Dorsolateral prefrontal cortex (tissue), 120 donors: ENCODE measurements at regions of chr1 and their contacts with region 1.

Region 1: GRCh38 chr1:39091845-39092645 is 65.9 kb downstream of the NDUFS5 start:
- DNase-seq: peak; percentile 61 to 82 (median 75)
- H3K4me3 ChIP-seq: no peak overlapping the region
- H3K27ac ChIP-seq: peak overlapping the region in 49 of 59 donors; percentile 3 to 93 (median 81)
- H3K27me3 ChIP-seq: no peaks in the 10 kb centered on the region
- CTCF ChIP-seq: peak in 55 of 56 donors; percentile 10 to 77 (median 68)

Region 2: DNA sequence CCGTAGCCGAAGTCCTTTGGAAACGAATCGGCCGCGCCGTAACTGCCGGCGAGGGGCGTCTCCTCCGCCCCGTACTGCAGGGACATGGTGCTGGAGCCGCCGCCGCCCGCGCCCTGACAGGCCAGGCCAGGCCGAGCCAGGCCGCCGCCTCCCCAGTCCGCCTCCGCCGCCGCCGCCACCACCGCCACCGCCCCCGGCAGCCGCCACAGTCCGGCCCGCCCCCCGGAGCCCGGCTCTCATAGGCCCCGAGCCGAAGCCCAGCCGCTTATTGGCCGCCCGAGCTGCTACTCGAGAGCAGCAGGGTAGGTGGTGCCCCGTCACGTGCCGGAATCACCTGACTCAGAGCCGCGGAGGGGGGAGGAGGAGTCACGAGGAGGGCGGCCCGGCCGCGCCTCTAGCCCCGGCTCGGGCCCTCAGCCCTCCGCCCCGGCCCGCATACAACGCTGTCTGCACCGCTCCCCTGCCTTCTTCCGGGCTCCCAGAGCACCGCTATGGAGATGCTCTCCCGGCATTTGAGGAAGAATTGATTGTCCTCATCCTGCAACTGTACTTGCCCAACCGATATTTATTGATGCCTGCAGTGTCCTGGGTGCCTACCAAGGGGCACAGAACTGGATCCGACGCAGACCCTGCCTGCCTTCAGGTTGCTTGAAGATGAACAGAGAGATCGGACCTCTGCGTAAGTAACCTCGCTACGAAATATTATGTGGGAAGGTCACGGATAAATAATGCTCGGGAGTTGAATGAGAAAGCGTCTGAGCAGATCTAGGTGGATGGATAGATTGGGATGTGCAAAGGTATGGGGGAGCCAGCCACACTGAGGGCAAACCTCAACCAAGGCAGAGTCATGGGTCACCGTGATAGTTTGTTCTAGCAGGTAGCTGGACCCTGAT is 232.2 kb before region 1 on chr1 and contains the start of gene RRAGC:
- intact Hi-C with region 1: loop called in 1 of 2 experiments (anchors 5 kb)
- DNase-seq: peak; percentile 99 to 100 (median 100)
- H3K4me3 ChIP-seq: peak within 1 kb of the TSS; percentile 70 to 100 (median 95)
- H3K27ac ChIP-seq: peak within 1 kb of the TSS; percentile 66 to 97 (median 89)
- H3K27me3 ChIP-seq: no peaks in the 10 kb centered on the region
- CTCF ChIP-seq: peak in 9 of 56 donors; percentile 2 to 31 (median 10)
- total RNA-seq, gene RRAGC: 18.0 to 36.1 (median 25.7) TPM